T-cell (primary cell): ENCODE measurements at regions of chr17 and their contacts with region 1.

Region 1: DNA sequence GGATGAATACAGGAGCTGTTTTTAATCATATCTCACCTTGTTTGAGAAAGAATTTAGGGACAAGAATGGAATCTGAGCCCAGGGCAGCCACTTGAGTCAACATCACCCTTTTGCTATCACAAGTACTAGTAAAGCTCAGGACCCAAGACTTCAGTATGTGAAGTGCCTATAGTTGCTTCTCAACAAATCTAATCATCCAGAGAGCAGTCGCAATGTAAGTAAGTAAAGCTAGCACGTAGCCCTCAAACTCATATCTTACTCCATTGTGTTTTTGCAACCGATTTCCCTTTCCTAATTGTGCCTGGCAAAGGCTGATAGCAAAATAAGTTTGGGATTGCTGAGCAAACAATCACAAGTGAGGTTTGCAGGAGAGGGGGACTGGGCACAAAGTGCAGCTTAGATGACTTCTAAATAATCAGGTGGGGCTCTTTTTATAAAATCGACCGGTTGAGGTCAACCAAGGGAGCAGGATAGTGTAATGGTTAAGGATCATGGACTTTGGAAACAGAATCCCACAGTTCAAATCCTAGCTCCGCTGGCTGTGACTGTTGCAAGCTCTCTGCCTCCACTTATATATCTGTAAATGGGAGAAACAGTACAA is 13.0 kb downstream of the TOB1 start:
- DNase-seq: peak in 1 of 35 experiments; percentile 4
- ATAC-seq: no peak
- H3K4me3 ChIP-seq: no peak overlapping the region
- H3K4me3 Mint-ChIP-seq: peak overlapping the region; percentile 73 to 80 (median 74)
- H3K27ac ChIP-seq: no peak overlapping the region
- H3K27ac Mint-ChIP-seq: peak overlapping the region in 1 of 2 donors; percentile 94
- H3K4me1 ChIP-seq: peaks cover 4 to 12% of the 10 kb centered on the region in 2 experiments
- H3K4me1 Mint-ChIP-seq: peaks cover 15 to 20% (median 16%) of the 10 kb centered on the region in 3 donors
- H3K27me3 ChIP-seq: no peaks in the 10 kb centered on the region
- H3K27me3 Mint-ChIP-seq: no peaks in the 10 kb centered on the region

Region 2: DNA sequence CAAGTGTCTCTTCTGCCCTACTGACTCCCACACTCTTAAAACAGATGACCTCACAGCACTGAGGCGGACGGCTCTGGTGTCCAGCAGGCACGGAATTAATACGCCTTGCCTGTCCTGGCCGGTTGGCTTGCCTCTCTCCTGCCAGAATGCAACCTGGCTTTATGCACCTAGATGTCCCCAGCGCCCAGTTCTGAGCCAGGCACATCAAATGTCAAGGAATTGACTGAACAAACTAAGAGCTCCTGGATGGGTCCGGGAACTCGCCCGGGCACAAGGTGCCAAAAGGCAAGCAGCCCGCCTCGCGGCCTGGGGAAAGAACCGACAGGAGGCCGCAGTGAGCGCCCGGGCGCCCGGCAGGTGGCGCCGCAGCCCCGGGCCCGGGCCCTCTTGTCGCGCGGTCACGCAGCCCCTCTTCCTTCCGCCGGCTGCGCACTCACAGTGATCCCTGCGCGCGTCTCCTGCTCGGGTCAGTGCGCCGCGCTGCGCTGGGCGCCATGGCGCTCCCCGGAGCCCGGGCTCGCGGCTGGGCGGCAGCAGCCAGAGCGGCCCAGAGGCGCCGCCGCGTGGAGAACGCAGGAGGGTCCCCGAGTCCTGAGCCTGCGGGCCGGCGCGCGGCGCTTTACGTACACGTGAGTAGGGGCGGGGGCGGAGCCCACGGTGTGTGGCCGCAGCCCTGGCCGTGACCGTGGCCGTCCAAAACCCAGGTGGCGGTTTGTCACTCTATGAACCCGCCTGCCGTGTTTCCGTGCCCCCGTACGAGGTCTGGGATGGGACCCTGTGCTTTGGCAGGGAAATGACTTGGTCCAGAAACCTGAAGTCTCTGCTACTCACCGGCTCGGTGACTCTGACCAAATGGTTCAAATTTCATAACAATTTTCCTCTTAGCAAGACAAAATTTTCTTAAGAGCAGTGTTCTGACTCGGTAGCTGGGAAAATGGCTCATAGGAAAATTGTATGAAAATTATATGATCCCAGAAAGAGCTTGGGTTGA is 374.4 kb before region 1 on chr17 and contains the start of gene RSAD1:
- CTCF ChIA-PET with region 1: interaction called in 1 of 2 experiments, 13 read pairs
- POLR2A ChIA-PET with region 1: no interaction called
- DNase-seq: peak; percentile 67 to 92 (median 81)
- ATAC-seq: peak; percentile 93 to 95 (median 94)
- H3K4me3 ChIP-seq: peak within 1 kb of the TSS; percentile 86 to 95
- H3K4me3 Mint-ChIP-seq: peak within 1 kb of the TSS; percentile 76 to 88 (median 82)
- H3K27ac ChIP-seq: peak within 1 kb of the TSS; percentile 81
- H3K27ac Mint-ChIP-seq: peak within 1 kb of the TSS; percentile 94 to 96
- H3K4me1 ChIP-seq: peaks cover 7 to 20% of the 10 kb centered on the region in 2 experiments
- H3K4me1 Mint-ChIP-seq: peaks cover 25 to 29% (median 27%) of the 10 kb centered on the region in 3 donors
- H3K27me3 ChIP-seq: peaks cover 0 to 14% of the 10 kb centered on the region in 2 experiments
- H3K27me3 Mint-ChIP-seq: no peaks in the 10 kb centered on the region
- total RNA-seq, gene RSAD1: 61.2 to 80.9 (median 73.2) TPM

Region 3: GRCh38 chr17:50935201-50935995 is 82.3 kb after region 1 on chr17:
- CTCF ChIA-PET with region 1: interaction called in 1 of 2 experiments, 15 read pairs
- POLR2A ChIA-PET with region 1: interaction called, 3 to 4 read pairs
- DNase-seq: no peak
- ATAC-seq: no peak
- H3K4me3 ChIP-seq: no peak overlapping the region
- H3K4me3 Mint-ChIP-seq: no peak overlapping the region
- H3K27ac ChIP-seq: no peak overlapping the region
- H3K27ac Mint-ChIP-seq: no peak overlapping the region
- H3K4me1 ChIP-seq: peaks cover 4 to 14% of the 10 kb centered on the region in 2 experiments
- H3K4me1 Mint-ChIP-seq: peaks cover 17 to 27% (median 21%) of the 10 kb centered on the region in 3 donors
- H3K27me3 ChIP-seq: no peaks in the 10 kb centered on the region
- H3K27me3 Mint-ChIP-seq: no peaks in the 10 kb centered on the region

Region 4: GRCh38 chr17:50949989-50950881 is 97.1 kb after region 1 on chr17:
- CTCF ChIA-PET with region 1: interaction called, 28 to 80 read pairs
- POLR2A ChIA-PET with region 1: interaction called, 6 to 7 read pairs
- DNase-seq: peak in 31 of 35 experiments; percentile 19 to 75 (median 43)
- ATAC-seq: peak; percentile 74 to 91 (median 83)
- H3K4me3 ChIP-seq: no peak overlapping the region
- H3K4me3 Mint-ChIP-seq: peak overlapping the region in 1 of 3 donors; percentile 13
- H3K27ac ChIP-seq: no peak overlapping the region
- H3K27ac Mint-ChIP-seq: peak overlapping the region in 1 of 2 donors; percentile 11
- H3K4me1 ChIP-seq: peaks cover 2 to 33% of the 10 kb centered on the region in 2 experiments
- H3K4me1 Mint-ChIP-seq: peaks cover 32 to 38% (median 35%) of the 10 kb centered on the region in 3 donors
- H3K27me3 ChIP-seq: peaks cover 0 to 5% of the 10 kb centered on the region in 2 experiments
- H3K27me3 Mint-ChIP-seq: no peaks in the 10 kb centered on the region

Region 5: GRCh38 chr17:50956750-50957523 is 103.8 kb after region 1 on chr17:
- CTCF ChIA-PET with region 1: interaction called, 28 to 80 read pairs
- POLR2A ChIA-PET with region 1: interaction called in 1 of 2 experiments, 3 read pairs
- DNase-seq: peak; percentile 19 to 81 (median 64)
- ATAC-seq: peak; percentile 88 to 93 (median 91)
- H3K4me3 ChIP-seq: no peak overlapping the region
- H3K4me3 Mint-ChIP-seq: no peak overlapping the region
- H3K27ac ChIP-seq: no peak overlapping the region
- H3K27ac Mint-ChIP-seq: peak overlapping the region; percentile 69 to 71
- H3K4me1 ChIP-seq: peaks cover 0 to 6% of the 10 kb centered on the region in 2 experiments
- H3K4me1 Mint-ChIP-seq: peaks cover 6 to 9% (median 6%) of the 10 kb centered on the region in 3 donors
- H3K27me3 ChIP-seq: peaks cover 0 to 5% of the 10 kb centered on the region in 2 experiments
- H3K27me3 Mint-ChIP-seq: no peaks in the 10 kb centered on the region

Region 6: DNA sequence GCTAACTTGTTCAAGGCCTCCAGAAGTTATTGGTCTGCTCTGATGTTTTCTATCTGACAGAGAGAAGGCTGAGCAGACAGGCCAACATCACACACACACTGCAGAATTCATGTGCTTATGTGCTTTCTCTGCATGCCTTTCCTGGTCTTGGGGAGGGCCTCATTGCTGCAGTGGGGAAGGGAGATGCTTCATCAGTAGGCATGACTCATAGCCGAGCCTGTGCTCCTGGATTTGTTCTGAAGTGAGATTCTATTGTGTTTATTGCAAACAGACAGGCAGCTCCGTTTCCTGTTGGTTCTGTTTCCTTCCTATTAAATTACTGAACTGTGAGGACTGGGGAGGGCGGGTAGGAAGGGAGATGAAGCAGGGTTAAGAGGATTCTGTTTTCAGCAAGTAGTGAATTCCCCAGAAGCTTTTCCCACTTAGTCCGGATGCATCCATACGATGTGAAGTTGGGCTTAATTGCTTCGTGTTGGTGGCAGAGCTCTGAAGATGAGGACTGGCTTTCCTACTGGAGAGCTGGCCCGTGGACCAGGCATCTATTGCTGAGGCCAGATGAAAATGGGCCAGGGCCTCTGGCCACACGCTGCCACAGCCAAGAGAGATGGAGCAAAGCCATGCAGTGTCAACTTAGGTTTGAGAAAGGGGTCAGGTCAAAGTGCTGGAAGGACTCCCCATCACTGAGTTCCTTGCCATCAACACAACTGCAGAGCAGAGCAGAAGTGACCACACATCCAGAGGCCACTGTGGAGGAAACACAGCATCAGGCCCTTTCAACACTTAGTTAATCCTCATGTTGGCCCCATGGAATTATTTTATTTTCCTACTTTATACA is 586.5 kb after region 1 on chr17:
- CTCF ChIA-PET with region 1: no interaction called
- POLR2A ChIA-PET with region 1: no interaction called
- DNase-seq: peak in 1 of 35 experiments; percentile 28
- ATAC-seq: peak in 3 of 4 experiments; percentile 59 to 84 (median 65)
- H3K4me3 ChIP-seq: no peak overlapping the region
- H3K4me3 Mint-ChIP-seq: no peak overlapping the region
- H3K27ac ChIP-seq: no peak overlapping the region
- H3K27ac Mint-ChIP-seq: peak overlapping the region; percentile 56 to 64
- H3K4me1 ChIP-seq: peaks cover 15 to 21% of the 10 kb centered on the region in 2 experiments
- H3K4me1 Mint-ChIP-seq: peaks cover 18 to 37% (median 25%) of the 10 kb centered on the region in 3 donors
- H3K27me3 ChIP-seq: peaks cover 0 to 4% of the 10 kb centered on the region in 2 experiments
- H3K27me3 Mint-ChIP-seq: no peaks in the 10 kb centered on the region

Region 7: GRCh38 chr17:52696362-52696761 is 1843.2 kb after region 1 on chr17:
- CTCF ChIA-PET with region 1: no interaction called
- POLR2A ChIA-PET with region 1: no interaction called
- DNase-seq: no peak
- ATAC-seq: no peak
- H3K4me3 ChIP-seq: no peak overlapping the region
- H3K4me3 Mint-ChIP-seq: no peak overlapping the region
- H3K27ac ChIP-seq: no peak overlapping the region
- H3K27ac Mint-ChIP-seq: no peak overlapping the region
- H3K4me1 ChIP-seq: no peaks in the 10 kb centered on the region
- H3K4me1 Mint-ChIP-seq: no peaks in the 10 kb centered on the region
- H3K27me3 ChIP-seq: no peaks in the 10 kb centered on the region
- H3K27me3 Mint-ChIP-seq: no peaks in the 10 kb centered on the region